ENCODE measurements at regions of chr20 and their contacts with region 1.

Region 1: DNA sequence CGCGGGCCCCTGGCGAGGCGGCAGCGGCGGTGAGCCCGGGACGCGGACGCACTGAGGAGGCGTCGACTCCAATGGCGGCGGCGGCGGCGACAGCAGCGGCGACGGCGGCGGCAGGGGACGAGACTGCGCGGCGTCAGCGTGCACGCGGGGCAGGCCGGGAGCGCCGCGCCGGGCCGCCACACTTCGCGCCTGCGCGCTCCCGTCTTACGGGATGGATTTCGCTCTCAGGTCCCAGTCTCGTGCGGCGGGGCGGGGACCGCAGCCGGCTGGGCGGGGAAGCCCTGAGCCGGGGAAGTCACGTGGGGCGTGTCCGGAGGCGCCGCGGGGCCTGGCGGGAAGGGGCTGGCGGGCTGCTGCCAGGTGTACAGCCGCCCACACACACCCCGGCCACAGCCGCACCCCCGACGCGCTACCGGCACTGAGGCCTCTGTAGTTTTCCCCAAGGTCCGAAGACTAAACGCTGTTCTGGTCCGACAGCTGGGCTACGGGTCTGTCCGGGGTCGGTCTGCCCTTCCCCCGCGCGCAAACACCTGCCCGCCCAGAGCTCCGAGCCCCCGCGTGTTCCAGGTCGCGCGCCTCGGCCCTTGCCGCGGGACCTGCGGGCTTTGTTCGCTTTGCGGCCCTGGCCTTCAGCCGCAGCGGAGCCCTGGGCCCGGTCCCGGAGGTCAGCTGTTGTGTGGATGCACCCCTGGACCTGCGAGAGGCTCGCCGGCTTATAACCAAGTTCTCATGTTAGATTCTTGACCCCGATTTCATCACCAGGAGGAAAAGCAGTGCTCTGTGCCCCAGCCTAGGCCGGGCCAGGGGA is at the start of gene YTHDF1:
- DNase-seq: peak; percentile 98
- H3K4me3 ChIP-seq: peak within 1 kb of the TSS; percentile 90 to 97 (median 96)
- H3K27ac ChIP-seq: peak within 1 kb of the TSS; percentile 83 to 87 (median 84)
- H3K4me1 ChIP-seq: peaks cover 27 to 52% (median 49%) of the 10 kb centered on the region in 4 donors
- H3K27me3 ChIP-seq: peaks cover 0 to 18% (median 0%) of the 10 kb centered on the region in 4 donors
- CTCF ChIP-seq: peak in 1 of 3 experiments; percentile 27
- EP300 ChIP-seq: no peak
- POLR2A ChIP-seq: peak; percentile 69
- total RNA-seq, gene YTHDF1: 17.9 to 32.1 (median 29.7) TPM

Region 2: DNA sequence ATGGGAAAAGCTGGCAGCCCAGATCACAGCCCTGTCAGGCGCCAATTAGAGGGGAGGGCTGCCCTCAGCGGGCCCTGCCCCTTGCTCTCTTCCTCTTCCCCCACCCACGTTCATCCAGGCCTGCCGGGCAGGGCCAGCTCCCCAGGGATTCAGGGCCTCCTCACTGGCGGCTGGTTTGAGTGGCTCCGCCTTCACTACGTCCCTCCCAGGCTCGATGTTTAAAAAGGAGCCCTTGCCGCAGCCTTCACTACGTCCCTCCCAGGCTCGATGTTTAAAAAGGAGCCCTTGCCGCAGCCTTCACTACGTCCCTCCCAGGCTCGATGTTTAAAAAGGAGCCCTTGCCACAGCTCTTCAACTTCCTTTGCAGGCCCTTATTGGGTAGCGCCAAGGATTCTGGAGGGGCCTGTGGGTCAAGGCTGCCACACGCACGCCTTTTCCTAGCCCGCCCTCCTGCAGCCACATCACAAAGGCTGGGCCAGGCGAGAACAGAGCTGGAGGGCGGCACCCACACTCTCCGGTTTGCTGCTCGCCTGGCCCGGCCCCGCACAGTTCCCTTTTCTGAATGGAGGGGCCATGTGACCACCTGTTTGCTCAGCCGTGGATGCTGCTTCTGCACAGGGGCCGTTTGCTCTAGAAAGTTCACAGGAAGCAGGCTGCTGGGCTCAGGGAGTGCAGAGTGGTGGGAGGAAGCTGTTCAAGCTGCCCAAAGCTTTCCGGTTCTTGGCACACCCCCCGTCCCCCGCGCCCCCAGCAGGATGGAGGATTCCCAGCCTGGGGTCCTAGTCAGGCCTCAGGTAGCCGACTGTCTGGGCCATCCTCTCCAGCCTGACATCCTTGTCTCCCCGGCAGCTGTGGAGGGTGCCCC is 262.2 kb before region 1 on chr20:
- intact Hi-C with region 1: loop called (anchors 10 kb)
- DNase-seq: no peak
- H3K4me3 ChIP-seq: peak overlapping the region; percentile 46 to 58 (median 49)
- H3K27ac ChIP-seq: peak overlapping the region; percentile 90 to 96 (median 94)
- H3K4me1 ChIP-seq: peaks cover 28 to 32% (median 31%) of the 10 kb centered on the region in 4 donors
- H3K27me3 ChIP-seq: no peaks in the 10 kb centered on the region
- CTCF ChIP-seq: no peak
- EP300 ChIP-seq: no peak
- POLR2A ChIP-seq: no peak

Region 3: DNA sequence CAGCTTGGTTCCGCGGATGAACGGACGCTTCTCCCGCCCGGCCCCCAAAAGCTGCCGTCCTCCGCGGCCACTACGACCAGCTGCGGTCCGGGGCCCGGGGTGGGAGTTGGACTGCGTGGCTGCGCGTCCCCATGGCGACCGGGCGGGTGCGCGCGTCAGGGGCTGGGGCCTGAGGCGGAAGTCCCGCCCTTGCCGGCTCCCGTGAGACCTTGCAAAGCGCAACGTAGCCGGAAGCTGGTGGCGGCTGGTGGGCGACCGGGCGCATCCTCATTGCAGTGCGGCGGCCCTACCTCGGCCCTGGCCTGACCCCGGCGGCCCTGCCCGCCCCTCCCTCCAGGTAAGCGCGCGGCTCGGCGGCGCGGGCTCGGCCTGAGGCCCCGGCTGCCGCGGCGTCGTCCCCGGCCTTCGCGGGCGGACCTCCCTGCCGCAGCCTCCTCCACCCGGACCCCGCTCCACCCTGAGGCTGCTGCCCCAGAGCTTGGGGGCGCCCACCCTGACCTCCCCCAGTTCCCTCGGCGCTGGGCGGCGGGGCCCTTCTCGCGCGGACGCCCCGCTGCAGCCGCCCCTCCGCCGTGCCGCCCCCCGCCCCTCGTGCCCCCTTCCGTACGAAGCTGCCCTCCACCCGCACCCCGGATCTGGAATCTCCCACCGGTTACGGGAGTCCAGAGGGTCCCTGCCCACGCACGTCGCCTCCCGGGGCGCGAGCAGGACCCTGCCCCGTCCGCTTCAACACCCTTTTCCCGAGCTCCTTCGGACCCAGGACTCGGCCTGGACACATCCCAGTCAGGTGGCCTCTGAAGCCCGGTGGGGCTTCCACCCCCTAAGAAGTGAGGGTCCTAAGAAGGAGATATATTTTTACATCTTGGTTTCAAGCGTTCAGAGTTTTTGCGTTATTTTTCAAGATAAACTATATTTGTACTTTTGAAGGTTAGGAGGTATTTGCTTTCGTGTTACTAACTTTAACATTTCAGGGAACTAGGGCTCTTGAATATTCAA is 56.6 kb after region 1 on chr20 and contains the start of gene ARFGAP1:
- intact Hi-C with region 1: loop called (anchors 2 kb)
- DNase-seq: peak; percentile 94
- H3K4me3 ChIP-seq: peak within 1 kb of the TSS; percentile 79 to 100 (median 90)
- H3K27ac ChIP-seq: peak within 1 kb of the TSS; percentile 69 to 84 (median 77)
- H3K4me1 ChIP-seq: peaks cover 21 to 42% (median 31%) of the 10 kb centered on the region in 4 donors
- H3K27me3 ChIP-seq: peaks cover 0 to 1% (median 0%) of the 10 kb centered on the region in 4 donors
- CTCF ChIP-seq: peak in 1 of 3 experiments; percentile 13
- EP300 ChIP-seq: no peak
- POLR2A ChIP-seq: no peak
- total RNA-seq, gene ARFGAP1: 35.8 to 50.9 (median 39.5) TPM